ENCODE measurements at regions of chr10 and their contacts with region 1.

Region 1: DNA sequence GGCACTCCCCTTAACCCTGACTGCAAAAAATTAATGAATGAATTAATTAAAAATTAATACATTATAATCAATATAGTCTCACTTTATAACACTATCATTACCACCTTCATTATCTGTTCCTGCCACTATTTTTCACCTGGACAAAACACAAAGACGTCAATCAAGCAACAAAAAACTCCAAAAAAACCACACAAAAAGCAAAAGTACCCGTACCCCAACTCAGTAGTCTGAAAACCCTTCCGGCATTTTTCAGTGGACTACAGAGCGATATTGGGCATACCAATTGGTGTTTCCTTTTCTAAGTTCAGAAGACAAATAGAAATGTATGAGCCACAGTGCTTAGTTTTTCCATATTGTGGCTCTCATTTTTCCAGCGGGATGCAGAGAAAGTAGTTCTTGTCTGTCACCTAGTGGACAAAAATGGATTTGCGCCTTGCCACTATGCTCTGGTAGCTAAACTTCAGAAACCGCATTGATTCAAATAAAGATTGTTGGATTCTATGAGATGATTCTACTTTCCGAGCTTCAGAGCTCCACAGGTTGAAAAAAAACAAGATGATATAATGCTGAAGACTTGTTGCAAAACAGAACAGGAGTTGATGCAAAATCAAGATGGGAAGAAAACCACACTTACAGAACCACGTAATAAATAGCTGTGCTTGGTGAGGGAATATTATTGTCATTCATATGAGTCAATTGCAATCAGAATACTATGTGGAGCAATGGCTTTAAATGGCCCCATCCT is 50.6 kb upstream of the ITGB1 start:
- DNase-seq: peak; percentile 94
- ATAC-seq: peak; percentile 27; the same call in 1 of the 2 replicates
- H3K4me3 ChIP-seq: no peak overlapping the region
- H3K27ac ChIP-seq: peak overlapping the region; percentile 99
- H3K4me1 ChIP-seq: peaks cover 55% of the 10 kb centered on the region
- H3K27me3 ChIP-seq: no peaks in the 10 kb centered on the region
- CTCF ChIP-seq: peak; percentile 91

Region 2: DNA sequence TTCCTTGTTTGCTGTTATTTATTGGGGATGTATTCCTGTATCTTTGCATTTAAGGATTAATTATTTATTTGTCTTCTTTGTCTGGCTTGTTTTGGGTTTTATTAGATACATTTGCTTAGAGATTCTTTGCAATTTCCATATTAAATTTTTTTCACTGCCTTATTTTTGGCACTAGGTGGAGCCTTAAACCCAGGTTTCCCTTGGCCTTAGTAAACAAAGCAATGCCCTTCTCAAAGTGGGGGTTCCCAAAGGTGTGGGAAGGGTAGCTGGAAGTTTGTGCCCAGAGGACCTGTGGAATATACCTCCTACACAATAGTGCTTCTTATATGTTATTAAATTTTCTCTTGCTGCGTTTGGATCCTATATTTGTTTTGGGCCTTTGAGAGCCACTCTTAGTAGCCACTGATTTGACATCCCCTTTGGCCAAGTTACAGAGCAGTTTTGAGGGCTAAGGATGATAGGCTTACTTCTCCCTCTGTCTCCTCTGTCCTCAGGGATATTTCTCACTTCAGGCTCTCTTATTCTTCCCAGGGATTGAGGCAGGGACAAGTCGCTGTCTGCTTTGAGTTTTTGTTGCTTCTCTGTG is 213.0 kb before region 1 on chr10:
- CTCF ChIA-PET with region 1: no interaction called
- POLR2A ChIA-PET with region 1: no interaction called
- in situ Hi-C with region 1: no loop called
- intact Hi-C with region 1: loop called (anchors 1 kb)
- DNase-seq: peak; percentile 28
- ATAC-seq: no peak
- H3K4me3 ChIP-seq: no peak overlapping the region
- H3K27ac ChIP-seq: peak overlapping the region; percentile 80
- H3K4me1 ChIP-seq: peaks cover 5% of the 10 kb centered on the region
- H3K27me3 ChIP-seq: no peaks in the 10 kb centered on the region
- CTCF ChIP-seq: peak; percentile 72

Region 3: DNA sequence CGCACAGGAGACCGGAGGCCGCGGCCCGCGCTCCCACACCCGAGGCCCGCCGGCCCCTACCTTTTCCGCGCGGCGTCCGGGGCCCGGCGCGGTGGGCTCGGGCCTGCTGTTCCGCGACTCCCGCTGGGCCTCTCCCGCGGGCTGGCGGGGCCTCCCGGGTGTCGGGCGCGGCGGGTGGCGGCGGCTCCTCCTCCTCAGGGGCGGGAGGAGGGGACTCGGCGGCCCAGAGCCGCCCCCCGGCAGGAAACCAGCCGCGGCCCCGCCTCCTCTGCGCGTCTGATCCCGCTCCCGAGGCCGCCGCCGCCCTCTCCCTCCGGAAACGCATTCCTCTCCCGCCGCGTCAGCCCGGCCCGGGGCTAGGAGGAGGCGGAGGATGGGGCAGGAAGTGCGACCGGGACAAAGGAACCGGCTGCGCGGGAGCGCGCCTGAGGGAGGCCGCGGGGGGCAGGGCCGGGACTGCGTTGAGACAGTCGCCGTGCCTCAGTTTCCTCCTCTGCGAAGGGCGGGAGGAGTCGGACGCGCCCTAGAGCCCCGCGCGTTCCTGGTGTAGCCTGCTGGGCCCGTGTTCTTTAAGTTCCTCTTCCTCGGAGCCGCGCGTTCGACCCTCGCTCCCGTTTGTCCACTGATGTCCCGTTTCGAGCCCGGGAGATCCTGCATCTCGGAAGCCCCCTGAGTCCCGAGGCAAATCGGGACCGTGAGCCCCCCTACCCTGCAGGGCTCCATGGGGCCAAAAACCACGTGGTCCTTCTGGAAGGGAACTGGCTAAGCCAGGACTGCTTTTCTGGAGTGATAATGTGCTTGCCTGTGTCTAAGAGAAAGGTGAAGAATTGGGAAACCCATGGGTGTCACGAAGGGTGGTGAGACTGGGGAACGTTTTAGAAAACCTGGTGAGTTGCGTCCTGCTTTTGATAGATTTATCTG is 50.3 kb before region 1 on chr10 and contains the start of gene ITGB1:
- CTCF ChIA-PET with region 1: interaction called, 4 read pairs
- POLR2A ChIA-PET with region 1: interaction called, 6 read pairs
- in situ Hi-C with region 1: no loop called
- intact Hi-C with region 1: loop called (anchors 5 kb)
- DNase-seq: no peak
- ATAC-seq: peak; percentile 79
- H3K4me3 ChIP-seq: peak within 1 kb of the TSS; percentile 77 to 89
- H3K27ac ChIP-seq: peak within 1 kb of the TSS; percentile 100
- H3K4me1 ChIP-seq: peaks cover 34% of the 10 kb centered on the region
- H3K27me3 ChIP-seq: no peaks in the 10 kb centered on the region
- CTCF ChIP-seq: no peak
- total RNA-seq, gene ITGB1: 803 TPM

Region 4: DNA sequence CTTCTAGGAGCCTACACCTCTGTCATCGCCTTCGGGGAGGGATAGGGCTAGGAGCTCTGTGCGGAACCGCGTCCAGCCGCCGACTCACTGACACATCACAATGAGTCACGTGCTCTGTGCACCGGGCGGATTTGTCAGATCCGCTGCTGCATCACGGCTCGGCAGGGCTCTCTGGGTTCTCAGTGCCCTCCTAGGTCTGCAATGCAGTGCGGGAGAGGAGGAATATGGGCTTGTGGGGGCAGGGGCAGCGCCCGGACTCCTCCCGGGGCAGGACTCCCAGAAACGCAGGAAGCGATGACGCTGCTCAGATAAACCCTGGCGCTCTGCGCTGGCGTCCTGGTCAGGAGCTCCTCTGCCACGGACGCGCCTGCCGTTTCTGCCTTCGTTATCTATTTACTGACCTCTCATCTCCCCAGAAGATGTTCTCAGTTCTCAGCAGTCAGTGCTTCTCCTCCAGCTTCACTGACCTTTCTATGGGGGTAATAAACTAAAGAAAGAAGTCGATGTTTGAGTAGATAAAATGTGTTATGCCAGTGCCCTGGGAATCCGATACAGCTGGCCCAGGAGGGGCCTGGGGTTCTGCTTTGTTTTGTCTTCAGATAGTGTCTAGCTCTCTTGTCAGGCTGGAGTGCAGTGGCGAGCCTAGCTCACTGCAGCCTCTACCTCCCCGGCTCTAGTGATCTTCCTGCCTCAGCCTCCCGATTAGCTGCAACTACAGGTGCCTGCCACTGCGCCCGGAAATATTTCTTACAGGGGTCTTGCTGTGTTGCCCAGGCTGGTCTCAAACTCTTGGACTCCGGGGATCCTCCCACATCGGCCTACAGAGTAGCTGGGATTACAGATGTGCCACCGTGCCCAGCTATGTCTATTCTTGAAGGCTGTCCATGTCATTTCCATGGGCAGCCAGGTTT is 27.9 kb before region 1 on chr10:
- CTCF ChIA-PET with region 1: no interaction called
- POLR2A ChIA-PET with region 1: interaction called, 6 read pairs
- in situ Hi-C with region 1: no loop called
- intact Hi-C with region 1: loop called (anchors 2 kb)
- DNase-seq: peak; percentile 95
- ATAC-seq: peak; percentile 90
- H3K4me3 ChIP-seq: peak overlapping the region; percentile 26 to 49
- H3K27ac ChIP-seq: peak overlapping the region; percentile 100
- H3K4me1 ChIP-seq: peaks cover 62% of the 10 kb centered on the region
- H3K27me3 ChIP-seq: no peaks in the 10 kb centered on the region
- CTCF ChIP-seq: no peak

Region 5: GRCh38 chr10:32995751-32996150 is 12.9 kb before region 1 on chr10:
- CTCF ChIA-PET with region 1: no interaction called
- POLR2A ChIA-PET with region 1: no interaction called
- in situ Hi-C with region 1: no loop called
- intact Hi-C with region 1: no loop called
- DNase-seq: no peak
- ATAC-seq: peak; percentile 46; the same call in 1 of the 2 replicates
- H3K4me3 ChIP-seq: no peak overlapping the region
- H3K27ac ChIP-seq: peak overlapping the region; percentile 88
- H3K4me1 ChIP-seq: no peaks in the 10 kb centered on the region; the same call in 1 of the 2 replicates
- H3K27me3 ChIP-seq: no peaks in the 10 kb centered on the region
- CTCF ChIP-seq: no peak

Region 6: GRCh38 chr10:33155720-33156638 is 147.3 kb after region 1 on chr10:
- CTCF ChIA-PET with region 1: interaction called, 4 read pairs
- POLR2A ChIA-PET with region 1: no interaction called
- in situ Hi-C with region 1: no loop called
- intact Hi-C with region 1: loop called (anchors 10 kb)
- DNase-seq: peak; percentile 87
- ATAC-seq: peak; percentile 90
- H3K4me3 ChIP-seq: no peak overlapping the region
- H3K27ac ChIP-seq: peak overlapping the region; percentile 71
- H3K4me1 ChIP-seq: peaks cover 8% of the 10 kb centered on the region; the same call in 1 of the 2 replicates
- H3K27me3 ChIP-seq: no peaks in the 10 kb centered on the region
- CTCF ChIP-seq: peak; percentile 72

Region 7: GRCh38 chr10:34078745-34079470 is 1070.2 kb after region 1 on chr10:
- CTCF ChIA-PET with region 1: no interaction called
- POLR2A ChIA-PET with region 1: no interaction called
- in situ Hi-C with region 1: no loop called
- intact Hi-C with region 1: no loop called
- DNase-seq: no peak
- ATAC-seq: no peak
- H3K4me3 ChIP-seq: no peak overlapping the region
- H3K27ac ChIP-seq: no peak overlapping the region
- H3K4me1 ChIP-seq: no peaks in the 10 kb centered on the region
- H3K27me3 ChIP-seq: no peaks in the 10 kb centered on the region
- CTCF ChIP-seq: no peak

Measured in Panc1 (cell line).